Posterior vena cava (tissue), 2 donors: ENCODE measurements at regions of chr17 and their contacts with region 1.

Region 1: DNA sequence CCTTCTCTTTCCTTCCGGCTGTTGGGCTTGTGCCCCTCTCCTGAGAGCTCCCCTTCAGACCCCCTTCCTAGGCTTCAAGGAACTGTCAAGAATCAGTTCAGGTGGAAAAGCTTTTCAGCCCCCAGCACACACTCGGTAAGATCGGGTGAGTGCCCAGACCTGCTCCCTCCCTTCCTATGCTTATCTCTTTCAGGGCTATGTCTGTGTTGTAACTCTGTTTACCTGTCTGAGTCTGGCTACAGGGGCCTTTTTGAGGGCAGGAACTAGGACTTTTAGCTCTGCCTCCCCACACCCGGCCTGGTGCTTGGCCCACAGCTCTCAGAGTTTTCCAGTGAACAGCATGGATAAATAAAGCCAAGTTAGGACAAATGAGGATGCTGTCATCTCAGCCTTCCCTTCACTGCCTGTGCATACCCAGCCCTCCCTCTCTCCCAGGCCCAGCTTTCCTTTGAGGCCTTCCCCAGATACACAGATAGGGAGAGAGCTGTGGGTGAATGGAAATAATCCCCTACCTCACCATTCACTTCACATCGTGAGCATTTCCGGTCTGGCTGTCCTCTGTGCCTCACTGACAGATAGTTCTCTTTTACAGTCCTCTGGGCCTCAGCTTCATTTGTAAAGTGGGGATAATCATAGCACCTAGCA is 5.7 kb upstream of the MRPS23 start:
- DNase-seq: no peak

Region 2: GRCh38 chr17:57833179-57833939 is 22.2 kb before region 1 on chr17:
- intact Hi-C with region 1: no loop called
- DNase-seq: peak; percentile 86

Region 3: GRCh38 chr17:57892146-57892828 is 36.8 kb after region 1 on chr17:
- intact Hi-C with region 1: loop called in 1 of 2 experiments (anchors 5 kb)
- DNase-seq: peak; percentile 96

Region 4: GRCh38 chr17:57995076-57995956 is 139.8 kb after region 1 on chr17:
- intact Hi-C with region 1: loop called (anchors 2 to 5 kb)
- DNase-seq: no peak

Region 5: GRCh38 chr17:58119491-58119890 is 264.0 kb after region 1 on chr17:
- intact Hi-C with region 1: loop called in 1 of 2 experiments (anchors 5 kb)
- DNase-seq: no peak